ENCODE measurements at regions of chr3 and their contacts with region 1.

Region 1: DNA sequence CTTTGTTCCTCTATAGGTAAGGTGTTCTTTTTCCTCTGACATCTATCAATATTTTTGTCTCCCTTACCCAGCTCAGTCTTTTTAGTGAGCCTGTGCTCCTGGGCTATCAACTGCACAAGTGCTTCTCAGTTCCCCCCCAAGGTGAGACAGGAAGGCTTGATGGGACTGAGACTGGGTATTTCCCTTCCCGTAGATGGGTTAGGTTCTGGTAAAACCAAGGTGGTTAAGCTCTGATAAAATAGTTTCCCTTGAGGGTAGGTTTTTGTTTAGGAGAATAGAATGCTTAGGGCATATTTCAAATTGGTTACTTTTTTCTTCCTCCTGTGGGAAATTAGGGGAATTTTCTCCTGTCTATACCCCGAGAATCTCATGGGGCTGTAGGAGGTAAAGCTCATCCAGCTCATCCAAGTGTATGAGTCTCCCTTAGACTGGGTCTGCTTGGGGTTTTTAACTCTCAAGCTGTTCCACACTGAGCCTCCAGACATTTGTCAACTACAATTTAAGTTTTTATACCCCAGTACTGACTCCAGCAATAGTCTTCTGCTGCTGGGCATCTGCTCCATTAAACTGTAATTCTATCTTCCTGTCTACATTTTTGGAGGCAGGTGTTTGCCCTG is 44.9 kb downstream of the OXSR1 start:
- DNase-seq: no peak
- H3K4me3 ChIP-seq: no peak overlapping the region
- H3K27ac ChIP-seq: no peak overlapping the region
- H3K4me1 ChIP-seq: no peaks in the 10 kb centered on the region
- H3K27me3 ChIP-seq: no peaks in the 10 kb centered on the region
- CTCF ChIP-seq: no peak

Region 2: GRCh38 chr3:38173834-38174418 is 36.3 kb before region 1 on chr3:
- CTCF ChIA-PET with region 1: no interaction called
- POLR2A ChIA-PET with region 1: no interaction called
- intact Hi-C with region 1: loop called (anchors 5 kb)
- DNase-seq: no peak
- H3K4me3 ChIP-seq: no peak overlapping the region
- H3K27ac ChIP-seq: no peak overlapping the region
- H3K4me1 ChIP-seq: peaks cover 18% of the 10 kb centered on the region
- H3K27me3 ChIP-seq: no peaks in the 10 kb centered on the region
- CTCF ChIP-seq: no peak

Measured in PC-9 (cell line).